ENCODE measurements at regions of chr1 and their contacts with region 1.

Region 1: DNA sequence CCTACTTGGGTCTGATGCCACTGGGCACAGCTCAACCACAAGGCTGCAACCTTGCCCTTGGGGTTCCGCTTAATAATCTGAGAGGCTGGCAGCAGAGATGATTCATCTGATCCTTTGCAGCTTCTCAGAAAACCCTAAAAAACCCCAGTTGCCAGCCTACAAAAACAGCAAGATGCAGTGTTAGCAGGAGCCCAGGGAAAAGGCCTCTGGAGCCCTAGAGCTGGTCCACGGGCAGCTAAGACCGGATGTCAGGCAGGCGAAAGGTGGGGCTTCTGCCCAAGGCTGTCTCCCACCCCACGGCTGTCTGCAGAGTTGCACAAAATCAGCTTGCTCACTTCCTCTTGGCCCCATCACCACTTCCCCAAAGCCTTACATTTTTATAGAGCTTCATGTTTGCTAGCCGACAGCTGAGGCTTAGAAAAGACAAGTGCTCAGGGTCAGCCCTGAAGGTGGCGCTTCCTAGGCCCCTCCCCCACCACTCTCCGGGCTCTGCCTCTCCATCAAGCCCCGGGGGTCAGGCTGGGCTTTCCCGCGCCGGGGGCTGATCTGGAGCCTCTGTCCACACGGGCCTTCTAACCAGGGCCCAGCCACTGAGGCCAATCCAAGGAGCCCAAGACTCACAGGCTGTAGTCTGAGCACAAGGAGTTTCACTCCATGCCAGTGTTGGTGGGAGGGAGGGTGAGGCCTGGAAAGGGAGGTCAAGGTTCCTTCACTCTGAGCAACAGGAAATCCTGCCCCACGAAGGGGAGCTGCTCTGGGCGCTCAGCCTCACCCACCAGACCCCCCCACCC is 4.2 kb upstream of the ADORA3 start:
- DNase-seq: peak; percentile 90
- ATAC-seq: peak; percentile 70
- H3K4me3 ChIP-seq: peak overlapping the region; percentile 12 to 62 (median 59)
- H3K4me3 Mint-ChIP-seq: peak overlapping the region; percentile 79
- H3K27ac ChIP-seq: peak overlapping the region; percentile 88 to 98
- H3K27ac Mint-ChIP-seq: peak overlapping the region; percentile 95
- H3K4me1 ChIP-seq: peaks cover 64 to 69% of the 10 kb centered on the region in 2 donors
- H3K4me1 Mint-ChIP-seq: peaks cover 57% of the 10 kb centered on the region
- H3K27me3 ChIP-seq: no peaks in the 10 kb centered on the region
- H3K27me3 Mint-ChIP-seq: no peaks in the 10 kb centered on the region
- CTCF ChIP-seq: no peak

Region 2: GRCh38 chr1:111471012-111471411 is 36.6 kb before region 1 on chr1:
- CTCF ChIA-PET with region 1: interaction called, 276 read pairs
- POLR2A ChIA-PET with region 1: interaction called, 10 read pairs
- intact Hi-C with region 1: loop called (anchors 1 kb)
- DNase-seq: peak; percentile 92
- ATAC-seq: peak; percentile 94
- H3K4me3 ChIP-seq: peak overlapping the region in 3 of 5 experiments; percentile 10 to 52 (median 36)
- H3K4me3 Mint-ChIP-seq: no peak overlapping the region
- H3K27ac ChIP-seq: peak overlapping the region; percentile 88 to 92
- H3K27ac Mint-ChIP-seq: no peak overlapping the region
- H3K4me1 ChIP-seq: peaks cover 55% of the 10 kb centered on the region in 2 donors
- H3K4me1 Mint-ChIP-seq: peaks cover 30% of the 10 kb centered on the region
- H3K27me3 ChIP-seq: no peaks in the 10 kb centered on the region
- H3K27me3 Mint-ChIP-seq: no peaks in the 10 kb centered on the region
- CTCF ChIP-seq: no peak

Region 3: DNA sequence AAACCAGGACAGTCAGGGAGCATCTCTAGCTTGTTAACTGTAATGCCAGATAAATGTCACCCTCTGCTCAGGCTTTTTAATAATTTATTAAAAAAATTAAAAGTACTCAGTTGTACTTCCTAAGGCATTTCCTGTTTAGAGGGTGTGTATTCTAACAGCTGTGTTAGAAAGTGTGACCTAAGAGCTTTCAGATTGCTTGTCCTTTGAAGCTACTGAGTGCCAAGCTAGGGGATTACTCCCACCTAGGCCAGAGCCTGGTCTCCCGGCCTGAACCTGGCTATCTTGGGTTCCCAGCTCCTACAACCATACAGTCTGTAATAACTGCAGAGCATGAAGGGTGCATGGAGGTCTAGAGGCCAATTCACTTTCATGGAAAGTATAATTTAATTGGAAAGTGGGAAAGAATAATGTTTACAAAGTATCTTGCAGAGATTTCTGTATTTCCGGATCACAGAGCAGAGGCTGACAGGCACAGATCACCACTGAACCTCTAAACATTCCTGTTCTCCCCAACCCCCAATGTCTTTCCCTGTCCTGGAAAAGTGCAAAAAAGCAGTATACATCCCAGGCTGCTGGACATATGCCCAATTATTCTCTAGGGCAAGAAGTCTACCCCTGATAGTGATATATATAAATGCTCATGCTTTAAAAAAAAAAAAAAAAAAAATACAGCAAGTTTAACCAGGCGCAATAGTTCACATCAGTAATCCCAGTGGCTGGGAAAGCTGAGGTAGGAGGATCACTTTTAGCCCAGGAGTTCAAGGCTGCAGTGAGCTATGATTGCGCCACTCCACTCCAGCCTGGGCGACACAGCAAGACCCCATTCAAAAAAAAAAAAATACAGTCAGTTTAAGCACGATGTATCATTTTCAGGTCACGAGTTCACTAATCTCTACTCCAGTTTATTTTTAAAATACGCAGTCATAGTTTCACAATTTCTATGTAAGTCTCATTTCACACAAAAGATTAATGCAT is 75.3 kb after region 1 on chr1:
- CTCF ChIA-PET with region 1: interaction called, 10 read pairs
- POLR2A ChIA-PET with region 1: no interaction called
- intact Hi-C with region 1: no loop called
- DNase-seq: no peak
- ATAC-seq: no peak
- H3K4me3 ChIP-seq: no peak overlapping the region
- H3K4me3 Mint-ChIP-seq: no peak overlapping the region
- H3K27ac ChIP-seq: no peak overlapping the region
- H3K27ac Mint-ChIP-seq: no peak overlapping the region
- H3K4me1 ChIP-seq: peaks cover 5 to 15% of the 10 kb centered on the region in 2 donors
- H3K4me1 Mint-ChIP-seq: peaks cover 9% of the 10 kb centered on the region
- H3K27me3 ChIP-seq: no peaks in the 10 kb centered on the region
- H3K27me3 Mint-ChIP-seq: no peaks in the 10 kb centered on the region
- CTCF ChIP-seq: no peak

Region 4: GRCh38 chr1:111648806-111649205 is 141.2 kb after region 1 on chr1:
- CTCF ChIA-PET with region 1: interaction called, 14 read pairs
- POLR2A ChIA-PET with region 1: no interaction called
- intact Hi-C with region 1: no loop called
- DNase-seq: no peak
- ATAC-seq: no peak
- H3K4me3 ChIP-seq: no peak overlapping the region
- H3K4me3 Mint-ChIP-seq: no peak overlapping the region
- H3K27ac ChIP-seq: peak overlapping the region in 1 of 2 donors; percentile 36
- H3K27ac Mint-ChIP-seq: no peak overlapping the region
- H3K4me1 ChIP-seq: peaks cover 18 to 24% of the 10 kb centered on the region in 2 donors
- H3K4me1 Mint-ChIP-seq: peaks cover 64% of the 10 kb centered on the region
- H3K27me3 ChIP-seq: no peaks in the 10 kb centered on the region
- H3K27me3 Mint-ChIP-seq: no peaks in the 10 kb centered on the region
- CTCF ChIP-seq: no peak

Region 5: GRCh38 chr1:111709986-111710385 is 202.4 kb after region 1 on chr1:
- CTCF ChIA-PET with region 1: interaction called, 73 read pairs
- POLR2A ChIA-PET with region 1: no interaction called
- intact Hi-C with region 1: no loop called
- DNase-seq: no peak
- ATAC-seq: no peak
- H3K4me3 ChIP-seq: no peak overlapping the region
- H3K4me3 Mint-ChIP-seq: no peak overlapping the region
- H3K27ac ChIP-seq: peak overlapping the region in 1 of 2 donors; percentile 21
- H3K27ac Mint-ChIP-seq: no peak overlapping the region
- H3K4me1 ChIP-seq: no peaks in the 10 kb centered on the region
- H3K4me1 Mint-ChIP-seq: no peaks in the 10 kb centered on the region
- H3K27me3 ChIP-seq: no peaks in the 10 kb centered on the region
- H3K27me3 Mint-ChIP-seq: no peaks in the 10 kb centered on the region
- CTCF ChIP-seq: no peak

Region 6: DNA sequence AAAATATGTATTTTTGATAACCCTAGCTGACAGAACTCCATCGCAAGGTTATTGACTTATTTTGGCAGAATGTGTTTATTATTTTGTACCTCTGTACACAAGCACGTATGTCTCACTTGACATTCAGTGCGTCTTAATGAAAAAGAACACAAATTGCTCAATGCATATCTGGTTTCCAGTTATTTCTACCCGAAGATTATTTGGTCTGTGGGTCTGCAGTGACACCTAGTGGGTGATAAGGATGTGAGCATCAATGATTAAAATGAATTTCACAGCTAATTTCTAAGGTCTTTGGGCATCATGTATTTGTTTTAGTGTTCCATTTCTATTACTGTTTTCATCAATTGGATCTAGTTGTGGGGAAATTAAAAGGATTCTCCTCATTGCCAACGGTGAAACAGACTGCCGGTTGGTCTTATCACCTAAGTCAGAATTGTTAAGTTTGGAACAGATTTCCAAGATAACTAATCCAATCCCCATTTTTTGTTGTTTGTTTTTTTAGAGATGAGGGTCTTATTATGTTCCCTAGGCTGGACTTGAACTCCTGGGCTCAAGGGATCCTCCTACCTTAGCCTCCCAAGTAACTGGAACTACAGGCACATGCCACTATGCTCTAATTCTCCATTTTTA is 262.0 kb after region 1 on chr1:
- CTCF ChIA-PET with region 1: interaction called, 26 read pairs
- POLR2A ChIA-PET with region 1: no interaction called
- intact Hi-C with region 1: loop called (anchors 1 kb)
- DNase-seq: peak; percentile 78
- ATAC-seq: peak; percentile 51
- H3K4me3 ChIP-seq: no peak overlapping the region
- H3K4me3 Mint-ChIP-seq: no peak overlapping the region
- H3K27ac ChIP-seq: no peak overlapping the region
- H3K27ac Mint-ChIP-seq: no peak overlapping the region
- H3K4me1 ChIP-seq: no peaks in the 10 kb centered on the region
- H3K4me1 Mint-ChIP-seq: no peaks in the 10 kb centered on the region
- H3K27me3 ChIP-seq: no peaks in the 10 kb centered on the region
- H3K27me3 Mint-ChIP-seq: no peaks in the 10 kb centered on the region
- CTCF ChIP-seq: peak; percentile 95

Region 7: GRCh38 chr1:111904478-111905218 is 397.0 kb after region 1 on chr1:
- CTCF ChIA-PET with region 1: no interaction called
- POLR2A ChIA-PET with region 1: no interaction called
- intact Hi-C with region 1: no loop called
- DNase-seq: no peak
- ATAC-seq: no peak
- H3K4me3 ChIP-seq: no peak overlapping the region
- H3K4me3 Mint-ChIP-seq: no peak overlapping the region
- H3K27ac ChIP-seq: no peak overlapping the region
- H3K27ac Mint-ChIP-seq: peak overlapping the region; percentile 11
- H3K4me1 ChIP-seq: no peaks in the 10 kb centered on the region
- H3K4me1 Mint-ChIP-seq: no peaks in the 10 kb centered on the region
- H3K27me3 ChIP-seq: peaks cover 0 to 7% (median 1%) of the 10 kb centered on the region in 4 experiments
- H3K27me3 Mint-ChIP-seq: peaks cover 36% of the 10 kb centered on the region
- CTCF ChIP-seq: no peak

Measured in B cell (primary cell).